Calu3 (cell line): ENCODE measurements at regions of chr4 and their contacts with region 1.

Region 1: GRCh38 chr4:38387348-38387747 is 276.7 kb upstream of the KLF3 start:
- DNase-seq: peak; percentile 49
- H3K4me3 Mint-ChIP-seq: no peak overlapping the region
- H3K27ac Mint-ChIP-seq: no peak overlapping the region
- H3K4me1 Mint-ChIP-seq: peaks cover 9% of the 10 kb centered on the region
- H3K27me3 Mint-ChIP-seq: no peaks in the 10 kb centered on the region
- CTCF ChIP-seq: no peak

Region 2: GRCh38 chr4:38230121-38230801 is 157.1 kb before region 1 on chr4:
- CTCF ChIA-PET with region 1: no interaction called
- intact Hi-C with region 1: loop called (anchors 5 kb)
- DNase-seq: peak; percentile 46
- H3K4me3 Mint-ChIP-seq: peak overlapping the region; percentile 32
- H3K27ac Mint-ChIP-seq: peak overlapping the region; percentile 79
- H3K4me1 Mint-ChIP-seq: peaks cover 40% of the 10 kb centered on the region
- H3K27me3 Mint-ChIP-seq: no peaks in the 10 kb centered on the region
- CTCF ChIP-seq: no peak

Region 3: GRCh38 chr4:38449506-38450174 is 62.3 kb after region 1 on chr4:
- CTCF ChIA-PET with region 1: interaction called, 3 read pairs
- intact Hi-C with region 1: loop called (anchors 5 kb)
- DNase-seq: peak; percentile 47
- H3K4me3 Mint-ChIP-seq: peak overlapping the region; percentile 37
- H3K27ac Mint-ChIP-seq: peak overlapping the region; percentile 78
- H3K4me1 Mint-ChIP-seq: peaks cover 15% of the 10 kb centered on the region
- H3K27me3 Mint-ChIP-seq: no peaks in the 10 kb centered on the region
- CTCF ChIP-seq: no peak

Region 4: GRCh38 chr4:38469410-38469809 is 82.1 kb after region 1 on chr4:
- CTCF ChIA-PET with region 1: no interaction called
- intact Hi-C with region 1: no loop called
- DNase-seq: no peak
- H3K4me3 Mint-ChIP-seq: no peak overlapping the region
- H3K27ac Mint-ChIP-seq: no peak overlapping the region
- H3K4me1 Mint-ChIP-seq: no peaks in the 10 kb centered on the region
- H3K27me3 Mint-ChIP-seq: no peaks in the 10 kb centered on the region
- CTCF ChIP-seq: no peak

Region 5: GRCh38 chr4:38612646-38613414 is 225.5 kb after region 1 on chr4:
- CTCF ChIA-PET with region 1: no interaction called
- intact Hi-C with region 1: loop called (anchors 5 kb)
- DNase-seq: no peak
- H3K4me3 Mint-ChIP-seq: no peak overlapping the region
- H3K27ac Mint-ChIP-seq: no peak overlapping the region
- H3K4me1 Mint-ChIP-seq: peaks cover 34% of the 10 kb centered on the region
- H3K27me3 Mint-ChIP-seq: no peaks in the 10 kb centered on the region
- CTCF ChIP-seq: no peak